ENCODE measurements at regions of chr7 and their contacts with region 1.

Region 1: DNA sequence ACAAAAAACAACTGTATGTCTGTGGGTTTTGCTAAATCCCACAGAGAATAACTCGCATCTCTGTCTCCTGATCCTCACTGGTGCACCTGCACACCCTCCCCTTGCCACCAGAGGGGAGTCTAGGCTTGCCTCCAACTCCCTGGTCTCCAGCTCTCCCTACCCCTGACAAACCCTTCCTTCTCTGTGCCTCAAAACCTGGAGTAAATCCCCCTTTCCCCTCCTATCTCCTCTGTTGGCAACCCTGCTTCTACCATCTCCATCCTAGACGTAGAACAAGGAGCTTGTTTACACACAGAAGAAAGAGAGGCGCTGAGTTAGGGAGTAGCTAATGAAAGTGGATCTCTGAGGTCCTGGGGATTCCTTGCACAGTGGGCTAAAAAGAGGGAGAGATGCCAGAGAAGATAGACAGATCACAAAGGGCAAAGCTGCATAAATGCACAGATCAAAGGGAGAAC is 6.0 kb downstream of the MBLAC1 start:
- DNase-seq: peak in 1 of 2 experiments; percentile 81
- H3K4me3 ChIP-seq: no peak overlapping the region
- H3K27ac ChIP-seq: no peak overlapping the region
- H3K4me1 ChIP-seq: peaks cover 0 to 8% (median 0%) of the 10 kb centered on the region in 4 experiments; a peak in 2 of 7 replicates
- H3K27me3 ChIP-seq: peaks cover 0 to 11% (median 0%) of the 10 kb centered on the region in 4 experiments; a peak in 2 of 7 replicates
- CTCF ChIP-seq: peak; percentile 92 to 98 (median 97)
- EP300 ChIP-seq: no peak
- POLR2A ChIP-seq: no peak
- RAD21 ChIP-seq: peak; percentile 97 to 98

Region 2: DNA sequence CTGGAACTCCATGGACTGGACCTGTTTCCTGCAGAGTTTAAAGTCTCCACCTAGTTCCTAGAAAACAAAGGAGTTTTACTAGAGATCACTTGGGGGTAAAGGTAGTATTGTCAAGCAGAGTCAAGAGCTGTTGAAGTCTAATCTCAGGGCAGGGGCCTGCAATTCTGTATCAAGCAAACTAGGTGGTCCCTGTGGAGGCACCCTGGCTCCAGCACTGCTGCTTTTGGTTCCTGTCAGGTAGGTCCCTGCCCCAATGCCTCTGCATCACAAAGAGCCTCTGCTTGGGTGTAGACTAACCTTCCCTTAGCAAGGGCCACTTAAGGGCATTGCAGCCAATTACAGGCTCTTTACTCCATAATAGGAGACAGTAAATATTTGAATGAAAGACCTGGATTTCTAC is 493.5 kb before region 1 on chr7:
- CTCF ChIA-PET with region 1: no interaction called
- POLR2A ChIA-PET with region 1: no interaction called
- DNase-seq: peak in 1 of 2 experiments; percentile 27
- H3K4me3 ChIP-seq: no peak overlapping the region
- H3K27ac ChIP-seq: no peak overlapping the region
- H3K4me1 ChIP-seq: peaks cover 3 to 11% (median 9%) of the 10 kb centered on the region in 4 experiments
- H3K27me3 ChIP-seq: no peaks in the 10 kb centered on the region
- CTCF ChIP-seq: no peak
- EP300 ChIP-seq: no peak
- POLR2A ChIP-seq: no peak
- RAD21 ChIP-seq: no peak

Region 3: DNA sequence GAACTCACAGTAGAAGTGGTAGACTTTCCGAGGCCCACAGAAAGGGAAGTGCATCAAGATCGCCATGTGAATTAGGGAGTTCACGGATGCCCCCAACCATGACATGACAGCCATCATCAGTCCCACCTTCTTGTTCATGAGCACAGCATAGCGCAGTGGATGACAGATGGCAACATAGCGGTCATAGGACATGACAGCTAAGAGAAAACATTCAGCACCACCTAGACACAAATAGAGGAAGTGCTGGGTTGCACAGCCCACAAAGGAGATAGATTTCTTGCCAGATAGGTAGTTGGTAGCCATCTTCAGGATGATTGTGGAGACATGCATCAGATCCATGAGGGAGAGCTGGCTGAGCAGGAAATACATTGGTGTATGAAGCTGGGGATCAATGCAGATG is 256.2 kb before region 1 on chr7:
- CTCF ChIA-PET with region 1: no interaction called
- POLR2A ChIA-PET with region 1: no interaction called
- DNase-seq: no peak
- H3K4me3 ChIP-seq: no peak overlapping the region
- H3K27ac ChIP-seq: no peak overlapping the region
- H3K4me1 ChIP-seq: no peaks in the 10 kb centered on the region
- H3K27me3 ChIP-seq: no peaks in the 10 kb centered on the region; a peak in 1 of 7 replicates
- CTCF ChIP-seq: no peak
- EP300 ChIP-seq: no peak
- POLR2A ChIP-seq: no peak
- RAD21 ChIP-seq: peak in 1 of 2 experiments; percentile 17; a peak in 1 of 4 replicates

Region 4: DNA sequence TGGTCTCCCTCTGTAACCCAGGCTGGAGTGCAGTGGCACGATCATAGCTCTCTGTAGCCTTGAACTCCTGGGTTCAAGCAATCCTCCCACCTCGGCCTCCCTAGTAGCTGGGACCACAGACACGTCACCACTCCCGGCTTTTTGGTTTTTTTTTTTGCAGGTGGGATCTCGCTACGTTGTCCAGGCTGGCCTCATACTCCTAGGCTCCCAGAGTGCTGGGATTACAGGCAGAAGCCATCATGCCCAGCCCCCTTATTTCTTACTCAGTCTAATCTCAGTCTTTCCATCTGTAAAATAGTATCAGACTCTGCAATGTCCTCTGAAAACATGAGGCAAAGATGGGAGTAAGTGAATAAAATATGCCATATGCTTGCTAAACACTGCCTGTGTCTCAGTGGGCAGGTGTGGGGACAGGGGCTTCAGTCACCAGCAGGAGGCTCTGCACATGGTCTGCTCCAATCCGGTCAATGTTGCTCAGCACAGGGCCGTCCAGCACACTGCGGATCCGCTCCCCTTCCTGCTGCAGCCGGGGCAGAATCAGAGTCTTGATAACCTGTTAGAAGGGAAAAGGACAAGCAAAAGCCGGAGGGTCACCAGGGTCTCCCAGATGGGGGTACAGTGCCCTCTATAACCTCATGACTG is 23.1 kb before region 1 on chr7:
- CTCF ChIA-PET with region 1: interaction called, 48 read pairs
- POLR2A ChIA-PET with region 1: interaction called, 68 read pairs
- DNase-seq: no peak
- H3K4me3 ChIP-seq: no peak overlapping the region
- H3K27ac ChIP-seq: no peak overlapping the region
- H3K4me1 ChIP-seq: no peaks in the 10 kb centered on the region; a peak in 1 of 7 replicates
- H3K27me3 ChIP-seq: no peaks in the 10 kb centered on the region
- CTCF ChIP-seq: peak in 2 of 3 experiments; percentile 24 to 37; a peak in 2 of 4 replicates
- EP300 ChIP-seq: no peak
- POLR2A ChIP-seq: no peak
- RAD21 ChIP-seq: no peak

Region 5: DNA sequence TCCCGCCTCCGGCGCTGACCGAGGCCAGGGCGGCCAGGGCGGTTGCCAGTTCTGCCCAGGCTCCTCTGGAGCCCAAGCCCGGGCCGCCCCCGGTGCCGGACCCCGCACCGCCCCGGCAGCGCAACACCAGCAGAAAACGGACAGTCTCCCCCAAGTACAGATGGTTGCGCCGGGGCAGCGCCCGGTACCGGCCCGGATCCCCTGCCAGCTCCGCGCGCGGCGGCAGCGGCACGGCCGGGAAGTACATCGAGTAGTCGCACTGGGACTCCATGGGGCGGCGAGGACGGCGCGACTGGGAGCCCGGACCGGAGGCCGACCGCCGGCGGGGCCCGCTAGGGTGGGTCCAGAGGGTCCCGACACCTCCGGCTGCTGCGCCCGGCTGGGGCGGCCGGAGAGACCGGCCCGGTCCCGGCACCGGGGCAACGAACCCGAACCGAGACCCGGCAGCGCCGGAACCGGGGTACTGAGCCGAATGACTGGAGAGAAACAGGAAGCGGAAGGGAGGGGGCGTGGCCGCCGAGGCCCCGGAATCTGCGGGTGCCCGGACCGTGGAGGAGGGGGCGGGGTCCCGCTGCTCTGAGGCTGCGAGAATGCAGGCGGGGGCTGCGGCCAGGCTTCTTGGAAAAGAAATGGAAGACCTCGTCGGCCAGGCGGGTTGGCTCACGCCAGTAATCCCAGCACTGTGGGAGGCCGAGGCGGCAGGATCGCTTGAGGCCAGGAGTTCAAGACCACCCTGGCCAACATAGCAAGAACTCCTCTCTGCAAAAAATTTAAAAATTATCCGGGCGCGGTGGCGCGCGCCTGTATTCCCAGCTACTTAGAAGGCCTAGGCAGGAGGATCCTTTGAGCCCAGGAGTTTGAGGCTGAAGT is 25.7 kb after region 1 on chr7 and contains the start of gene TRAPPC14:
- CTCF ChIA-PET with region 1: interaction called, 94 read pairs
- POLR2A ChIA-PET with region 1: interaction called, 7 read pairs
- DNase-seq: peak; percentile 83 to 99
- H3K4me3 ChIP-seq: peak within 1 kb of the TSS; percentile 57 to 88 (median 80)
- H3K27ac ChIP-seq: peak within 1 kb of the TSS; percentile 24; the same call in 1 of the 2 replicates
- H3K4me1 ChIP-seq: peaks cover 0 to 15% (median 9%) of the 10 kb centered on the region in 4 experiments; a peak in 5 of 7 replicates
- H3K27me3 ChIP-seq: no peaks in the 10 kb centered on the region
- CTCF ChIP-seq: no peak
- EP300 ChIP-seq: peak in 1 of 2 experiments; percentile 48; a peak in 1 of 3 replicates
- POLR2A ChIP-seq: peak; percentile 16 to 30; a peak in 1 of 3 replicates
- RAD21 ChIP-seq: no peak
- total RNA-seq, gene TRAPPC14: 20.2 and 22.1 TPM in 2 replicates

Region 6: GRCh38 chr7:100190048-100190711 is 57.5 kb after region 1 on chr7:
- CTCF ChIA-PET with region 1: interaction called, 16 read pairs
- POLR2A ChIA-PET with region 1: no interaction called
- DNase-seq: no peak
- H3K4me3 ChIP-seq: no peak overlapping the region
- H3K27ac ChIP-seq: no peak overlapping the region
- H3K4me1 ChIP-seq: no peaks in the 10 kb centered on the region
- H3K27me3 ChIP-seq: no peaks in the 10 kb centered on the region; a peak in 1 of 7 replicates
- CTCF ChIP-seq: peak in 1 of 3 experiments; percentile 15; a peak in 2 of 4 replicates
- EP300 ChIP-seq: no peak
- POLR2A ChIP-seq: no peak
- RAD21 ChIP-seq: peak; percentile 7; a peak in 1 of 4 replicates

Region 7: GRCh38 chr7:100215895-100216294 is 83.2 kb after region 1 on chr7:
- CTCF ChIA-PET with region 1: interaction called, 104 read pairs
- POLR2A ChIA-PET with region 1: interaction called, 7 read pairs
- DNase-seq: no peak
- H3K4me3 ChIP-seq: no peak overlapping the region
- H3K27ac ChIP-seq: no peak overlapping the region
- H3K4me1 ChIP-seq: peaks cover 0 to 4% (median 1%) of the 10 kb centered on the region in 4 experiments; a peak in 1 of 7 replicates
- H3K27me3 ChIP-seq: peaks cover 0 to 4% (median 2%) of the 10 kb centered on the region in 4 experiments; a peak in 3 of 7 replicates
- CTCF ChIP-seq: no peak
- EP300 ChIP-seq: no peak
- POLR2A ChIP-seq: no peak
- RAD21 ChIP-seq: no peak

Measured in H1 (cell line).